HEK293 (cell line): ENCODE measurements at regions of chr7 and their contacts with region 1.

Region 1: DNA sequence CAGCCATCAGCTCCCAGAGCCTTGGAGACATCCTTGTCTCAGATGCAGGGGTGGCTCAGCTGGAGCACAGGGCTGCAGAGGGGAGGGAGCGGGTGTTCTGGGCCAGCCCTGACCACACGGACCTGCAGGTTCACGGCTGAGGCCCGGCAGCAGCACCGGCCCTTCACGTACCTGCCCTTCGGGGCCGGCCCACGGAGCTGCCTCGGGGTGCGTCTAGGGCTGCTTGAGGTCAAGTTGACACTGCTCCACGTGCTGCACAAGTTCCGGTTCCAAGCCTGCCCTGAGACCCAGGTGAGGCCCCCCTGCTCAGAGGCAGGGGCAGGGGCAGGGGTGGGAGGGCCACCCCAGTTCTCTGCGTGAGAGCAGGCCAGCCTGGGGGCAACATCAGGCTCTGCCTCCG is 45.2 kb downstream of the PARP12 start:
- H3K4me3 ChIP-seq: no peak overlapping the region
- H3K27ac ChIP-seq: no peak overlapping the region
- H3K4me1 ChIP-seq: no peaks in the 10 kb centered on the region
- CTCF ChIP-seq: no peak

Region 2: GRCh38 chr7:140003913-140004382 is 13.6 kb before region 1 on chr7:
- CTCF ChIA-PET with region 1: interaction called, 12 read pairs
- POLR2A ChIA-PET with region 1: no interaction called
- H3K4me3 ChIP-seq: no peak overlapping the region
- H3K27ac ChIP-seq: no peak overlapping the region
- H3K4me1 ChIP-seq: no peaks in the 10 kb centered on the region
- CTCF ChIP-seq: 0 out of 2 replicates have a peak, but pooled peaks have one; percentile 17